AG04449 (cell line): ENCODE measurements at regions of chr15 and their contacts with region 1.

Region 1: DNA sequence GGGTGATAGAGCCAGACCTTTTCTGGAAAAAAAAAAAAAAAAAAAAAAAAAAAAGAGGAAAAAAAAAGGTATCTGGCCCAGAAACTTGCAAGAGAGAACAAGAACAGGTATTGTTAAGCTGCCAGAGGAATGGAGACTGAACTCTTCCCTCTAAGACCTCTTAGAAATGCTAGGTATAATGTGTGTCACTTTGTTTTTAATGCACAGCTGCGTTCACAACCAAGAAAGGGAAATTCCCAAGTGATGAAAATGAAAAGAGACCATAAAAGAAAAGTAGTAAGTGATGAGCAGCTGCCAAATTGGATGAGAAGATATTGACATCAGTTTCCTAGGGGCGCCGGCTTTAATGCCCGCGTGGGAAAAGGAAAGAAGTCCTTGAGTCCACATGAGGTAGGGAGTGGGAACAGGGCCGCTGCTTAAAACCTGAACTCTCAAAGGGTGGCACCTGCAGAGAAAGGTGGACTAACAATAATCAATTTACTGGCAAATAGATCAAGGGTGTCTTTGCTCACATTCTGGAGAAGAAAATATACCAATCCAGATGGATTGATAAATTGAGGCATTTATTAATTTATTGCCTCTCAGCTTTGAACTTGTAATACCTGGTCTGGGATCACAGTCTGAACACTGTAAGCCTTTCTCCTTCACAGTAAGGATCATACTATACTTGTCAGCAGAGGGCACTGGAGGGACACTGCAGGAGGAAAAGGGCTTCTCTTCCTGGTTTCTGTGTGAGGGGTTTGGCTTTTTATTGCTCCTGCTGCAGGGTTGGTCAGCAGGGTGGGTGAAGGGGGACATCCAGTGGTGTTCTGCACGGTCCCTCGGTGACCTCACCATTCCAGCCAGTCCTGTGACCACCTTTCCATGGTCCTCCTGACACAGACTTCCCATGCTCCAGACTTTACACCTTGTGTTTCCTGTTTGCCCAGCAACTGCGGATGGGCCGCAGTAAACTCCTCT is 131.6 kb downstream of the AQP9 start:
- DNase-seq: no peak
- H3K4me3 ChIP-seq: no peak overlapping the region
- CTCF ChIP-seq: peak; percentile 69

Region 2: DNA sequence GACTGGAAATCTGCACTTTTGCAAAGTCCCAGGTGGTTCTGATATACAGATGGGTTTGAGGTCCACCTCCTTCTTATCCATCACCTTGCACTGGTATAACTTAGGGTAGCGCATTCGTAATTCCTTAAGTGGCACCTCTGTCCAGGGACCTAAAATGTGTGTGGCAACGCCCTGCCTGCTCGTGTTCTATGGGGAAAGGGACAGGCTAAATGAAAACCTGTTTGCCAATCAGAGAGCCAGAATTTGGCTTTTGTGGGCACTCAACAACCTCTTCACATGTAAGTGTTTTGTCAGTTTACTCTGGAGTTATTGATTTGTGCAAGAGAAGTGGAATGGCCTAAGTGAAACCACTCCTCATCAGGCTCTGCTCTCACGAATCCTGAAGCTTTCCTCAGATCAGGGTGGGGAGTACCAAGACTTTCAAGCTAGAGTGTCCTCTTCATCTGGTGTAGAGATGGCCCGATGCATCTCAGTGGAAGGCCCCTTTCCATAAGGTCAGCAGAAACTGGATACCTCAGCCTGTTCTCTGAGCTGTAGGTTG is 342.6 kb before region 1 on chr15:
- CTCF ChIA-PET with region 1: no interaction called
- POLR2A ChIA-PET with region 1: no interaction called
- DNase-seq: no peak
- H3K4me3 ChIP-seq: no peak overlapping the region
- CTCF ChIP-seq: no peak

Region 3: DNA sequence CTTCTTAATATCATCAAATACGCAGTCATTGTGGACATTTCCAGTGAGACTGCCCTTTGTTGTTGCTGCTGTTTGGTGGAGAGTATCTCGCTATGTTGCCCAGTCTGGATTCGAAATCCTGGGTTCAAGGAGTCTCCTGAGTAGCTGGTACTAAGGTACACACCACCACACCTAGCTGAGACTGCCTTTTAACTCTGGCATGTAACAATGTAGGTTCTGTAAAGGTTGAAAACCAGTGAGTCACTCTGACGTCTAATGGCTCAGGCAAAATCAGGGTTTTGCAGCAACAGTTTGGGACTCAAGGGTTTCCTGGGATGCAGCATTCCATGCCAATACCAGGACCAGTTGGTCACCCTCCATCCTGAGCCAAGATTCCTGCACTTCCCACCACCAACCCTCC is 79.3 kb before region 1 on chr15:
- CTCF ChIA-PET with region 1: no interaction called
- POLR2A ChIA-PET with region 1: no interaction called
- DNase-seq: no peak
- H3K4me3 ChIP-seq: no peak overlapping the region
- CTCF ChIP-seq: no peak

Region 4: GRCh38 chr15:58252586-58253323 is 17.0 kb before region 1 on chr15:
- CTCF ChIA-PET with region 1: interaction called, 10 read pairs
- POLR2A ChIA-PET with region 1: interaction called, 3 read pairs
- DNase-seq: no peak
- H3K4me3 ChIP-seq: no peak overlapping the region
- CTCF ChIP-seq: no peak